Common myeloid progenitor, CD34-positive (primary cell): ENCODE measurements at regions of chr5 and their contacts with region 1.

Region 1: DNA sequence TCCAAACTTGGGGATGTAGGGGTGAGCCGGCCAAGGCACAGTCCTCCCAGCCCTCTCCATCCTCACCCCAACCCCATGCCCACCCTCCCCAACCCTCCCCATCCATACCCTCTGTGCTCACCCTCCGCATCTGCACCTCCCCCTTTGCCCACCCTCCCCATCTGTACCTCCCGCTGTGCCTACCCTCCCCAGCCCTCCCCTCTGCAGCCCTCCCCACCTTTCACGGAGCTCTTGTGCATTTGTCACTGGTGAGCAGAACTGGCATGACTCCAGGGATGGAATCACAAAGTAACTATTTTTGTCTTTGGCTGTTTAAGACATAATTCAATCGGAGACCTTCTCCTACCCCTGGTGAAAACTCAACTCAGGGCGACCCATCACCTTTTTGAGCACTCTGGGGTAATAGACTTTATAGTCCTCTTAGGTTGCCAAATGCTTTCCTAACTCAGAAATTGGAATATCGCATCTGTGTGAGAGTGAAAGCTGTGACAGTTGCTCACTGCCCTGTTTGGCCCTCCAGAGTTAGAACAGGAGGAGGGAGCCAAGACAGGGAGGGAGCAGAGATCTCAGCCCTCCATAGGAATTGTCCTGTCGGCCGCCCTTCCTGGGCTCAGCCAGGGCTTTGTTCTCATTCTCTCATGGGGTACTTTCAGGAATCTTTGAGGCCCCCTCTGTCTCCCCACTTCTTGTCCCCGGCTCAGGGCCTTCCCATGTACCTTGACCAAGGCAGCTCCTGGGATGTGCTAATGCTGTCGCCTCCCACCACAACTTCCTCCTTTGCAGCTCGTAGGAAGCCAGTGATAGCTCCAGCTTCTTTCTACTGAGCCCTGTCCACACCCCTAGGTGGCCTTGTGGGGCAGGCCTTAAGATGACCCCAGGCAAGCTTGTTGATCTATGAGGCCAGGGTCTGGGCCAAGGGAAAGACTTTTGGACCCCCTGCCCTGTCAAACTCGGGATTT is 36.2 kb downstream of the OTULIN start:
- DNase-seq: peak; percentile 20 to 64 (median 50)
- H3K4me3 ChIP-seq: no peak overlapping the region
- H3K27ac ChIP-seq: no peak overlapping the region
- H3K4me1 ChIP-seq: peaks cover 0 to 15% (median 7%) of the 10 kb centered on the region in 4 experiments
- H3K27me3 ChIP-seq: no peaks in the 10 kb centered on the region

Region 2: GRCh38 chr5:14685757-14686156 is 15.0 kb before region 1 on chr5:
- CTCF ChIA-PET with region 1: interaction called, 12 read pairs
- POLR2A ChIA-PET with region 1: no interaction called
- DNase-seq: peak; percentile 32 to 69 (median 61)
- H3K4me3 ChIP-seq: no peak overlapping the region
- H3K27ac ChIP-seq: no peak overlapping the region
- H3K4me1 ChIP-seq: peaks cover 0 to 2% (median 0%) of the 10 kb centered on the region in 4 experiments
- H3K27me3 ChIP-seq: no peaks in the 10 kb centered on the region

Region 3: GRCh38 chr5:14714706-14715105 is 13.9 kb after region 1 on chr5:
- CTCF ChIA-PET with region 1: no interaction called
- POLR2A ChIA-PET with region 1: no interaction called
- DNase-seq: no peak
- H3K4me3 ChIP-seq: no peak overlapping the region
- H3K27ac ChIP-seq: no peak overlapping the region
- H3K4me1 ChIP-seq: no peaks in the 10 kb centered on the region
- H3K27me3 ChIP-seq: no peaks in the 10 kb centered on the region